ENCODE measurements at regions of chr11 and their contacts with region 1.

Region 1: GRCh38 chr11:76919887-76920746 is 59.4 kb downstream of the ACER3 start:
- DNase-seq: peak; percentile 66
- H3K4me3 ChIP-seq: peak overlapping the region; percentile 12 to 41; a peak in 3 of 4 replicates
- H3K27ac ChIP-seq: no peak overlapping the region
- H3K4me1 ChIP-seq: peaks cover 3 to 9% of the 10 kb centered on the region in 2 experiments; a peak in 2 of 4 replicates
- H3K27me3 ChIP-seq: no peaks in the 10 kb centered on the region
- CTCF ChIP-seq: peak; percentile 97
- EP300 ChIP-seq: no peak
- RAD21 ChIP-seq: peak; percentile 79

Region 2: GRCh38 chr11:76734456-76735420 is 185.4 kb before region 1 on chr11:
- CTCF ChIA-PET with region 1: interaction called, 108 read pairs
- POLR2A ChIA-PET with region 1: no interaction called
- DNase-seq: no peak
- H3K4me3 ChIP-seq: no peak overlapping the region
- H3K27ac ChIP-seq: peak overlapping the region in 1 of 2 experiments; percentile 3; a peak in 1 of 4 replicates
- H3K4me1 ChIP-seq: peaks cover 0 to 16% of the 10 kb centered on the region in 2 experiments; a peak in 1 of 4 replicates
- H3K27me3 ChIP-seq: peaks cover 6% of the 10 kb centered on the region; the same call in 1 of the 2 replicates
- CTCF ChIP-seq: no peak
- EP300 ChIP-seq: no peak
- RAD21 ChIP-seq: no peak

Region 3: DNA sequence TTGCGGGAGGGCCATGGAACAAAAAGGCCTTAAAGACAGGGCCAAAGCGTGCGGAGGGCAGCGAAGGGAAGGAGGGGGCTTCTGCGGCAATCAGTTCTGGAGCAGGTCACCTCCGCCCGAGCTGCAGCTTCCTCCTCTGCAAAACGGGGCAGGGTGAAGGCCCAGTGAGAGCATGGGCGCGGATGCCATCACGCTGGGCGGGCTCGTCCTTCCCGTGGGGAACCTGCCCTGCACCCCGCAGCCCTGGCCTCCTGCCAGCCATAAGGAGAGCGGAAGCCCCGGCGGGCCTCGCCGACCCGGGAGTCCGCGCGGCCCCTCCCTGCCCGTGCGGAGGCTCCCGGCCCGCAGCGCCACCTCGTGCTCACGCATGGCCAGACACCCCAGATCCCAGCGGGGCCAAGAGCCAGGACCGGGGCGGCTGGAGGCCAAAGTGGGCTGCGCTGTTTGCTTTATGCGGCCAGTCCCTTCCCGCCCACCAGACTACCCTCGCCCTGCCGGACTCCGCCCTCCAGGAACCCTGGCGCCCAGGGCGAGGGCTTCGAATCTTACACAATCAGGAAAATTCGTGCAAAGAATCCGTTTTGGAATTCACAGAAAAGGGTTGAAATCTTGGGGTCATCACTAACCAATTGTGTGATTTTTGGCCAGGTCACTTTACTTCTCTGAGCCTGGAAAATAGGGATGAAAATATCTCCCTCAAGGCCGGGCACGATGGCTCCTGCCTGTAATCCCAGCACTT is 120.9 kb before region 1 on chr11:
- CTCF ChIA-PET with region 1: interaction called, 127 read pairs
- POLR2A ChIA-PET with region 1: no interaction called
- DNase-seq: peak; percentile 97
- H3K4me3 ChIP-seq: peak overlapping the region in 1 of 2 experiments; percentile 46; a peak in 1 of 4 replicates
- H3K27ac ChIP-seq: no peak overlapping the region; a peak in 1 of 4 replicates
- H3K4me1 ChIP-seq: peaks cover 0 to 9% of the 10 kb centered on the region in 2 experiments; a peak in 1 of 4 replicates
- H3K27me3 ChIP-seq: no peaks in the 10 kb centered on the region
- CTCF ChIP-seq: peak; percentile 80
- EP300 ChIP-seq: no peak
- RAD21 ChIP-seq: peak; percentile 83

Region 4: GRCh38 chr11:76850815-76851214 is 69.3 kb before region 1 on chr11:
- CTCF ChIA-PET with region 1: interaction called, 17 read pairs
- POLR2A ChIA-PET with region 1: no interaction called
- DNase-seq: no peak
- H3K4me3 ChIP-seq: no peak overlapping the region
- H3K27ac ChIP-seq: no peak overlapping the region
- H3K4me1 ChIP-seq: no peaks in the 10 kb centered on the region; a peak in 1 of 4 replicates
- H3K27me3 ChIP-seq: peaks cover 7% of the 10 kb centered on the region; the same call in 1 of the 2 replicates
- CTCF ChIP-seq: no peak
- EP300 ChIP-seq: no peak
- RAD21 ChIP-seq: no peak

Region 5: DNA sequence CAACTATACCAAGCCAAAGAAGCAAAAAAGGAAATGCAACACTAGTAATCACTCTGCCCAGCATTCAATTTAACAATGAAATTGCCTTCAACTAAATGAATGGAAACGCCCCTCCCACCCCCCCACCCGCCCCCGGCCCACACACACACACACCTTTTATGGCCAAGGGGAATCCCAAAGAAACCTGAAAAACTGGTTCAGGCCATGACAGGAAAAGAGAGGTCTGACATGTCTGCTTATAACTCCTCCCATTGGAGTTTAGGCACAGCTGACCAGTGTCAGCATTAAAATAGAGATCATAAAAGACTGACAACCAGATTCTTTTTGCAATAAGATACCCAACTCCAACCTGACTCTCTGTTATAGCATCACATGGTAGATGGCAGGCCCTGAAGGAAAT is 16.8 kb before region 1 on chr11:
- CTCF ChIA-PET with region 1: interaction called, 59 read pairs
- POLR2A ChIA-PET with region 1: interaction called, 3 read pairs
- DNase-seq: no peak
- H3K4me3 ChIP-seq: no peak overlapping the region
- H3K27ac ChIP-seq: no peak overlapping the region
- H3K4me1 ChIP-seq: no peaks in the 10 kb centered on the region
- H3K27me3 ChIP-seq: no peaks in the 10 kb centered on the region
- CTCF ChIP-seq: no peak
- EP300 ChIP-seq: no peak
- RAD21 ChIP-seq: no peak

Region 6: GRCh38 chr11:77047007-77047927 is 127.2 kb after region 1 on chr11:
- CTCF ChIA-PET with region 1: interaction called, 77 read pairs
- POLR2A ChIA-PET with region 1: no interaction called
- DNase-seq: peak; percentile 82
- H3K4me3 ChIP-seq: peak overlapping the region; percentile 34 to 67
- H3K27ac ChIP-seq: peak overlapping the region in 1 of 2 experiments; percentile 48; a peak in 1 of 4 replicates
- H3K4me1 ChIP-seq: peaks cover 3 to 6% of the 10 kb centered on the region in 2 experiments; a peak in 2 of 4 replicates
- H3K27me3 ChIP-seq: no peaks in the 10 kb centered on the region
- CTCF ChIP-seq: peak; percentile 79
- EP300 ChIP-seq: no peak
- RAD21 ChIP-seq: peak; percentile 74

Region 7: GRCh38 chr11:77179681-77180080 is 259.6 kb after region 1 on chr11:
- CTCF ChIA-PET with region 1: no interaction called
- POLR2A ChIA-PET with region 1: no interaction called
- DNase-seq: no peak
- H3K4me3 ChIP-seq: no peak overlapping the region
- H3K27ac ChIP-seq: no peak overlapping the region
- H3K4me1 ChIP-seq: no peaks in the 10 kb centered on the region; a peak in 1 of 4 replicates
- H3K27me3 ChIP-seq: no peaks in the 10 kb centered on the region
- CTCF ChIP-seq: no peak
- EP300 ChIP-seq: no peak
- RAD21 ChIP-seq: no peak

Region 8: GRCh38 chr11:77473801-77474683 is 553.9 kb after region 1 on chr11 and contains the start of gene PAK1:
- CTCF ChIA-PET with region 1: no interaction called
- POLR2A ChIA-PET with region 1: no interaction called
- DNase-seq: peak; percentile 94
- H3K4me3 ChIP-seq: peak within 1 kb of the TSS; percentile 67 to 69
- H3K27ac ChIP-seq: peak within 1 kb of the TSS in 1 of 2 experiments; percentile 74; a peak in 2 of 4 replicates
- H3K4me1 ChIP-seq: peaks cover 0 to 5% of the 10 kb centered on the region in 2 experiments; a peak in 1 of 4 replicates
- H3K27me3 ChIP-seq: no peaks in the 10 kb centered on the region
- CTCF ChIP-seq: peak; percentile 31
- EP300 ChIP-seq: no peak
- RAD21 ChIP-seq: peak; percentile 44
- polyA plus RNA-seq, gene PAK1: 14.2 and 17.9 TPM in 2 replicates

Measured in SK-N-SH (cell line).